Right ventricle myocardium superior (tissue), 1 donor: ENCODE measurements at regions of chr18 and their contacts with region 1.

Region 1: DNA sequence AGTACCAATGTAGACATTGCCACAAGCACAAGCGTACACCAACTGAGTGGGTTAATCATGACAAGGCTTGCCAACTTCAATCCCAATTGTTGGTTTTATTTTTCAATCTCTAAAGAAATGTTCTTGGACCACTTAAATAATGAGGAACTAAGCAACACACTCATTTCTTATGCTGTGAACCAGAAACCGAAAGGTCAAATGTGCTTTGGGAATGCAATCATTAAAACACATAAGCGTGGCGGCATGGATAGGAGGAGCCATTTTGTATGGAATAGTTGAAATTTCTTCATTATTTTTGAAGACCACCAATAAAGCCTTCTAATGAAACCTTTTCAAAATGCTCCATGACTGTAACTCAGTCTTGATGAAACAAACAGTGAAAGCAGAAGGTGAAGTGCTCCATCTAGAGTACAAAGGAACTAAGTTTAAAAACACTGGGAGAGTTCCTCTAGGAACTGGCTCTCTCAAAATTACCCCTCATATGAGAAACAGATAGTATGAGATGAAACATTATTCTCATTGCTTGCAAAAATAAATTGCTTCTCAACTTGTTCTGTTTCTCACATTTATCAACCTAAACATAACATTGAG is 113.2 kb upstream of the CHST9 start:
- DNase-seq: no peak
- ATAC-seq: peak; percentile 67

Region 2: GRCh38 chr18:27017901-27018500 is 280.3 kb before region 1 on chr18:
- intact Hi-C with region 1: loop called (anchors 5 kb)
- DNase-seq: no peak
- ATAC-seq: peak; percentile 78

Region 3: GRCh38 chr18:27062802-27063201 is 235.5 kb before region 1 on chr18:
- intact Hi-C with region 1: no loop called
- DNase-seq: no peak
- ATAC-seq: no peak